Naive thymus-derived CD4-positive, alpha-beta T cell (primary cell): ENCODE measurements at regions of chr19 and their contacts with region 1.

Region 1: DNA sequence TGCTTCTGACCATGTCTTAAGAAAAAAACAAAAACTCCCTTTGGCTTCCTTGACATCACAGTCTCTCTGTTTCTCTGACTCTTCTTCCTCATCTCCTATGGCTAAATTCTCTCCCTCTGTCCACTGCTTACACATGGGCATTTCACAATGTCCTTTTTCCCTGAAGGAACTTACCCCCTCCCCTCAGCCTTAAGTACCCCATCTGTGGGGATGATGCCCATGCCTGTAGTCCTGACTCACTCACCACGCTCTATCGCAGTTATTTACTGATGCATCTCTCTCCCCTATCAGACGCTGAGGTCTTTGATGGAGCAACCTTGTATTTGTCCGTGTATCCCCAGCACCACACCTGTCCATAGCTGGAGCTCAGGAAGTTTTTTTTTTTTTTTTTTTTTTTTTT is 32.4 kb downstream of the ACTN4 start:
- DNase-seq: no peak
- ATAC-seq: peak; percentile 12
- H3K4me3 ChIP-seq: no peak overlapping the region
- H3K4me3 Mint-ChIP-seq: peak overlapping the region in 2 of 10 donors; percentile 10 to 25
- H3K27ac ChIP-seq: no peak overlapping the region
- H3K27ac Mint-ChIP-seq: peak overlapping the region in 1 of 9 donors; percentile 56
- H3K4me1 ChIP-seq: peaks cover 0 to 98% of the 10 kb centered on the region in 2 donors
- H3K4me1 Mint-ChIP-seq: peaks cover 30 to 92% (median 51%) of the 10 kb centered on the region in 7 donors
- H3K27me3 ChIP-seq: no peaks in the 10 kb centered on the region
- H3K27me3 Mint-ChIP-seq: no peaks in the 10 kb centered on the region

Region 2: DNA sequence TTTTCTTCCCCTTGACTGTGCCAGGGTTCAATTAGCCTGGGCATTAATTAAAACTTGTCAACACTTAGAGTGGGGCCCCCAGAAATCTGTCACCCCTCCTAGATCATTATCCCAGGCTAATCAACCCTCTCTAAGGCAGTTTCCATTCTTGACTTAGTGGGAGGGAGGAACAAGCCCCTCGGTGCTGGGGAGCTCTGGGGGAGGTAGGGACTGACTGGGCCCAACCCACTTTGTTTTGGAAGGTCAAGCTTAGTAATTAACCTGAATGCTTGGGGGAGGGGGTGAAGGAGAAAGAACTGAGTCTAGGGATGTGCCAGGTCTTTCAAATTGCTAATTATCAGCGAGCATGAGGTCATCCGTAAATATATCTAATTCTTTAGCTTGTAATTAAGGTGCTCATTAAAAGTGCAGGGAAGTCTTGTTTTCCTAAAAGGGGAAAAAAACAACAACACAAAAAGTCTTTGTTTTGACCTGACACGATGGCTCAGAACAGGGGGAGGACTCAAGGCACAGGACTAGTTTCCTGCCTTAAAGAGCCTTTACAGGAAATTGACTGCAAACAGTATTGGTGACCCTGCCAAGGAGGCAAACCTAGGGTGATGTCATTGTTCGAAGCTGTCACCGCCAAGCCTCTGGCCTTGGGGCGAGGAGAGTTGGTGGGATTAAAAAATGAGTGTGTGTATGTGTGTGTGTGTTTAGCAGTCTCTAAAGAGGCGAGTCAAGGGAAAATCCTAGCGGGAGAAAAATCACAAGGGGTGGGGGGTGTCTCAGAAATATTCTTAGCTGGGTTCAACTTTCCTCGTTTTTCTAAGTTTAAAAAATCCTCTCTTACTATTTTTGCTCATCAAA is 13.0 kb before region 1 on chr19:
- CTCF ChIA-PET with region 1: no interaction called
- POLR2A ChIA-PET with region 1: no interaction called
- intact Hi-C with region 1: loop called in 1 of 2 experiments (anchors 2 kb)
- DNase-seq: no peak
- ATAC-seq: peak; percentile 48
- H3K4me3 ChIP-seq: no peak overlapping the region
- H3K4me3 Mint-ChIP-seq: peak overlapping the region in 8 of 10 donors; percentile 7 to 70 (median 28)
- H3K27ac ChIP-seq: no peak overlapping the region
- H3K27ac Mint-ChIP-seq: peak overlapping the region in 1 of 9 donors; percentile 71
- H3K4me1 ChIP-seq: peaks cover 38 to 88% of the 10 kb centered on the region in 2 donors
- H3K4me1 Mint-ChIP-seq: peaks cover 34 to 88% (median 65%) of the 10 kb centered on the region in 7 donors
- H3K27me3 ChIP-seq: peaks cover 0 to 7% of the 10 kb centered on the region in 2 donors
- H3K27me3 Mint-ChIP-seq: peaks cover 0 to 30% (median 25%) of the 10 kb centered on the region in 5 donors